ENCODE measurements at regions of chr21 and their contacts with region 1.

Region 1: GRCh38 chr21:35400233-35400957 is 351.3 kb upstream of the RUNX1 start:
- DNase-seq: peak; percentile 42
- ATAC-seq: peak; percentile 89
- H3K4me3 Mint-ChIP-seq: peak overlapping the region; percentile 33
- H3K27ac Mint-ChIP-seq: peak overlapping the region; percentile 82
- H3K4me1 Mint-ChIP-seq: peaks cover 28% of the 10 kb centered on the region
- H3K27me3 Mint-ChIP-seq: peaks cover 2% of the 10 kb centered on the region

Region 2: GRCh38 chr21:34745557-34746255 is 654.7 kb before region 1 on chr21:
- CTCF ChIA-PET with region 1: interaction called, 7 read pairs
- POLR2A ChIA-PET with region 1: no interaction called
- intact Hi-C with region 1: loop called (anchors 1 kb)
- DNase-seq: peak; percentile 77
- ATAC-seq: peak; percentile 93
- H3K4me3 Mint-ChIP-seq: no peak overlapping the region
- H3K27ac Mint-ChIP-seq: peak overlapping the region; percentile 35
- H3K4me1 Mint-ChIP-seq: peaks cover 5% of the 10 kb centered on the region
- H3K27me3 Mint-ChIP-seq: peaks cover 1% of the 10 kb centered on the region

Region 3: GRCh38 chr21:35256467-35256988 is 143.9 kb before region 1 on chr21:
- CTCF ChIA-PET with region 1: interaction called, 3 read pairs
- POLR2A ChIA-PET with region 1: no interaction called
- intact Hi-C with region 1: loop called (anchors 5 to 10 kb)
- DNase-seq: no peak
- ATAC-seq: no peak
- H3K4me3 Mint-ChIP-seq: no peak overlapping the region
- H3K27ac Mint-ChIP-seq: no peak overlapping the region
- H3K4me1 Mint-ChIP-seq: peaks cover 32% of the 10 kb centered on the region
- H3K27me3 Mint-ChIP-seq: peaks cover 5% of the 10 kb centered on the region

Region 4: DNA sequence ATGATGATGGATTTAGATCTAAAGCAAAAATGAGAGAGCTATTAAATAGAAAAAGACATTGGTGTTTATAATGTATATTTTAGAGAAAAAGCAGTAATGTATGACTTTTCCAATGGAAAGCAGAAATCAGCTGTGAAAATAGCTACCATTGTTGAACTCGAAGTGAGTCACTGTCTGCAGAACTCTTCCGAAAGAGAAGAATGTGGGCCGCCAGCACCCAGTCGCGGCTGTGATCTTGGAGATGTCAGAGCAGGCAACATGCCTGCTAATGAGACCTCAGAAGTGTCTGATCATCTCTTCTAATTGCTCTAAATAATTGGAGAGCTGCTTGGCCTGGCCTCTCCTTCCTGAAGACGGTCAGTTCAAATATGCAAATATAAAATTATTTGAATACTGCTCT is 17.7 kb before region 1 on chr21:
- CTCF ChIA-PET with region 1: interaction called, 11 read pairs
- POLR2A ChIA-PET with region 1: no interaction called
- intact Hi-C with region 1: no loop called
- DNase-seq: no peak
- ATAC-seq: no peak
- H3K4me3 Mint-ChIP-seq: no peak overlapping the region
- H3K27ac Mint-ChIP-seq: no peak overlapping the region
- H3K4me1 Mint-ChIP-seq: peaks cover 7% of the 10 kb centered on the region
- H3K27me3 Mint-ChIP-seq: peaks cover 3% of the 10 kb centered on the region

Region 5: DNA sequence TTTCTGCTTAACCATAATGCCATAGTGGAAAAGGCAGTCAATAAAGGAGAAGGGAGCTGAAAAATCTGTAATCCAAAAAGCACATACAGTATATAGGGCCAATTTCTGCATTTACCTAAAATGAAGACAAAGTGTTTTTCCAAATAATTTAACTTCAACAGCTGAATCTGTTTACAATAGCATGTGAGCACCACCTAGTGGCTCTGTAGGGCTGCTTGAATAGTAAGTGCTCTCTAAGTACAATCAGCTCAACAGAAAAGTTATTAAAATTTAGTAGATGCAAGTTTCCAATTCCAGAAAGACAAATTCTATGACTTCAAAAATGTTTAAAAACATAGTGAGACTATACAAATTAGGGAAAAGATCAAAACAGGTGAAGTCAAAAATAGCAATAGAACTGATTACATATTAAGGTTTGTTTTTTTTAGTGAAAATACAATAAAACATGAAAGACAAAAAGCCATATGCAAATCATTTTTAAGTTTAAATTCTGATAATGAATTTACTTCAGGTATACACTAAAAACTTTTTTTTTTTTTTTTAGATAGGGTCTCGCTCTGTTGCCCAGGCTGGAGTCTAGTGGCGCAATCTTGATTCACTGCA is 439.9 kb after region 1 on chr21:
- CTCF ChIA-PET with region 1: no interaction called
- POLR2A ChIA-PET with region 1: no interaction called
- intact Hi-C with region 1: loop called (anchors 2 to 10 kb)
- DNase-seq: peak; percentile 73
- ATAC-seq: no peak
- H3K4me3 Mint-ChIP-seq: no peak overlapping the region
- H3K27ac Mint-ChIP-seq: no peak overlapping the region
- H3K4me1 Mint-ChIP-seq: peaks cover 2% of the 10 kb centered on the region
- H3K27me3 Mint-ChIP-seq: no peaks in the 10 kb centered on the region

Region 6: DNA sequence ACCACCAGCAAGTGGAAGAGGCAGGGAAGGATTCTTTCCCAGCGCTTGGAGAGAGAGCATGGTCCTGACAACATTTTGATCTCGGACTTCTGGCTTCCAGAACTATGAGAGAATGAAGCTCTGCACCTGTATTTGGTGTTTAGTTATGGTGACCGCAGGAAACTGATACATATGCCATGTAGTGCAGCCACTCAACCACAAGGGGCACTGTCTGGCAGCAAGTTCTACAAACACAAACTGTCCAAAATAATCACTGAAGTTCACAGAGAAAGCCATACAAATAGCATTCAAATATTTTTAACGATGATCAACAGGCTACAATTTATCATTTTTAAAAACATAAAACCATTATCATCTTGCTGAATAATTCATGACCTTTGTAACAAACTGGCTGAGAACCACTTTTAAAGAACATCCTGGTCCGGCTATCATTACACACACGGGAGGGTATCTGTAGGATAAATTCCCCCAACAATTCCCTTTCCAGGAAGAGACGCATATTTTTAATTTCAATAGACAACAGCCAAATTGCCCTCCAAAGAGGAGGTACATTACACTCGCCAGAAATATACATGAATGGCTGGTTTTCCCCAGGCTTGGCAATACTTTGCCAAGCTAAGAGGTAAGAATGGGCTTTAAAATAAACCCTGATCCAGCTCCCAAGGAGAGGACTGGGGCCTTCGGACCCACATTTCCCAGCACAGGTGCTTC is 725.3 kb after region 1 on chr21:
- CTCF ChIA-PET with region 1: no interaction called
- POLR2A ChIA-PET with region 1: no interaction called
- intact Hi-C with region 1: no loop called
- DNase-seq: peak; percentile 76
- ATAC-seq: peak; percentile 42
- H3K4me3 Mint-ChIP-seq: no peak overlapping the region
- H3K27ac Mint-ChIP-seq: no peak overlapping the region
- H3K4me1 Mint-ChIP-seq: peaks cover 11% of the 10 kb centered on the region
- H3K27me3 Mint-ChIP-seq: no peaks in the 10 kb centered on the region